Caco-2 (cell line): ENCODE measurements at regions of chr6 and their contacts with region 1.

Region 1: GRCh38 chr6:170306324-170307079 is at the start of gene FAM120B:
- DNase-seq: peak; percentile 93
- H3K4me3 ChIP-seq: peak within 1 kb of the TSS; percentile 91
- H3K4me3 Mint-ChIP-seq: peak within 1 kb of the TSS; percentile 90
- H3K27ac Mint-ChIP-seq: peak within 1 kb of the TSS; percentile 83
- H3K4me1 ChIP-seq: peaks cover 8% of the 10 kb centered on the region; the same call in 1 of the 2 replicates
- H3K4me1 Mint-ChIP-seq: peaks cover 11% of the 10 kb centered on the region
- H3K27me3 ChIP-seq: no peaks in the 10 kb centered on the region
- H3K27me3 Mint-ChIP-seq: no peaks in the 10 kb centered on the region
- CTCF ChIP-seq: no peak
- total RNA-seq, gene FAM120B: 20.9 and 21.0 TPM in 2 replicates

Region 2: DNA sequence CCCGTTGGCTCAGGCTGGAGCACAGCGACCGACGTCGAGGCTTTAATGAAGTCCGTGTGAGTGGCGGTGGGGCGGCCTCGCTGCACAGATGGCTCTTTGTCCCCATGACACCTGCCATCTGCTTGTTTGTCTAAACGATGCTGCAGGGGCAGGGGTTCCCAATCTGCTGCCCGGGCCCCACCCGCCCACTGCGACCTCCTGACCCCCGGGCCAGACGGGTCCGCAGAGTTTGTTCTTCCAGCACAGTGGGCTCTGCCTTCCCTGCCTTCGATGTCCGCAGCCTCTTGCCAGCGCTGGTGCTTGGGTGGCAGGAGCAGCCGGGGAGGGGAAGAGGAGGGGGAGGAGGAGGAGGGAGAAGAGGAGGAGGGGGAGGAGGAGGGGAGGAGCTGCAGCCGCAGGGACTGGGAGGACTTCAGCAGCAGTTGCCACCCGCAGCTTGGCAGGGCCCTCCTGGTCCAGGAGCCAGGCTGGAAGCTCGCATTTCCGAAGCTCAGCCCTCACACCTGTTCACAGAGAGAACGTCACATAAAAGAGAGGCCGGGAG is 225.6 kb before region 1 on chr6:
- CTCF ChIA-PET with region 1: no interaction called
- POLR2A ChIA-PET with region 1: no interaction called
- intact Hi-C with region 1: no loop called
- DNase-seq: peak in 1 of 2 experiments; percentile 17
- H3K4me3 ChIP-seq: no peak overlapping the region
- H3K4me3 Mint-ChIP-seq: no peak overlapping the region
- H3K27ac Mint-ChIP-seq: no peak overlapping the region
- H3K4me1 ChIP-seq: no peaks in the 10 kb centered on the region
- H3K4me1 Mint-ChIP-seq: peaks cover 11% of the 10 kb centered on the region
- H3K27me3 ChIP-seq: no peaks in the 10 kb centered on the region
- H3K27me3 Mint-ChIP-seq: no peaks in the 10 kb centered on the region
- CTCF ChIP-seq: no peak

Region 3: DNA sequence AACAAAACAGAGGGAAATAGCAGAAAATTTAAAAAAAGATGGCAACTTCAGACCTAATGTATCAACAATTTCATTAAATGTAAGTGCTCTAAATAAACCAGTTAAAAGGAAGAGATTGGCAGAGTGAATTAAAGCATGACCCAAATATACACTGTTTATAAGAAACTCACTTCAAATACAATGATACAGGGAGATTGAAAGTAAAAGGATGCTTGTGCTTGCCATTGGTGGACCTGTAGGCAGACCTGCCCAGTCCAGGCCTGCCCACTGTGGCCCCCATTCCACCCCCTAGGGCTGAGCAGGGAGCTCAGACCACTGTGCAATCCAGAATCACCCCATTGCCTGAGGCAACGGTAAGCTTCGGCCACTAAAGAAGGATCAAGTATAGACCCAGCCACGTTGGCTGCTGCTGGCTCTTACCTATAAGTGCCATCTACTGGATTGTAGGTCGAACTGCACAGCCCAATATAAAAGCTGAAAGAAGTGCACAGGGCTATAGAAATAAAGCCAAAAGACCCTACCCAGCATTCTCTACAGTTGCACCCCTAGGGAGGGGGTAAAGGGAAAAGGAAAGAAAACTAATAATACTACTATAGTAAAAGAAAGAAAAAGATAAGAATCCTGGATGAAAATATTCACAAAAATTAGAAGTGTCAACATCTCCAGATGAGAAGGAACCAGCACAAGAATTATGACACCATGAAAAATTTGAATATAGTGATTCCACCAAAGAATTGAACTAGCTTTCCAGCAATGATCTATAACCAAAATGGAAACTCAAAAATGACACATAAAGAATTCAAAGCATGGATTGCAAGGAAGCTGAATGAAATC is 210.5 kb after region 1 on chr6:
- CTCF ChIA-PET with region 1: interaction called, 4 read pairs
- POLR2A ChIA-PET with region 1: no interaction called
- intact Hi-C with region 1: loop called (anchors 5 kb)
- DNase-seq: peak; percentile 65 to 72
- H3K4me3 ChIP-seq: no peak overlapping the region
- H3K4me3 Mint-ChIP-seq: no peak overlapping the region
- H3K27ac Mint-ChIP-seq: no peak overlapping the region
- H3K4me1 ChIP-seq: no peaks in the 10 kb centered on the region
- H3K4me1 Mint-ChIP-seq: no peaks in the 10 kb centered on the region
- H3K27me3 ChIP-seq: no peaks in the 10 kb centered on the region
- H3K27me3 Mint-ChIP-seq: no peaks in the 10 kb centered on the region
- CTCF ChIP-seq: peak; percentile 67 to 86